Mucosa of descending colon (tissue), 3 donors: ENCODE measurements at regions of chr11 and their contacts with region 1.

Region 1: GRCh38 chr11:64152841-64153691 is 12.8 kb downstream of the MACROD1 start:
- DNase-seq: peak; percentile 67 to 82 (median 74)
- ATAC-seq: peak; percentile 96
- H3K4me3 ChIP-seq: no peak overlapping the region
- H3K4me1 ChIP-seq: no peaks in the 10 kb centered on the region
- CTCF ChIP-seq: peak; percentile 100

Region 2: GRCh38 chr11:63838678-63839507 is 314.2 kb before region 1 on chr11 and contains the start of gene MARK2:
- intact Hi-C with region 1: loop called in 1 of 2 experiments (anchors 10 kb)
- DNase-seq: peak; percentile 98 to 100 (median 100)
- ATAC-seq: peak; percentile 88
- H3K4me3 ChIP-seq: peak within 1 kb of the TSS; percentile 81
- H3K4me1 ChIP-seq: peaks cover 42% of the 10 kb centered on the region
- CTCF ChIP-seq: no peak
- total RNA-seq, gene MARK2: 71.9 to 111 (median 94.5) TPM

Region 3: DNA sequence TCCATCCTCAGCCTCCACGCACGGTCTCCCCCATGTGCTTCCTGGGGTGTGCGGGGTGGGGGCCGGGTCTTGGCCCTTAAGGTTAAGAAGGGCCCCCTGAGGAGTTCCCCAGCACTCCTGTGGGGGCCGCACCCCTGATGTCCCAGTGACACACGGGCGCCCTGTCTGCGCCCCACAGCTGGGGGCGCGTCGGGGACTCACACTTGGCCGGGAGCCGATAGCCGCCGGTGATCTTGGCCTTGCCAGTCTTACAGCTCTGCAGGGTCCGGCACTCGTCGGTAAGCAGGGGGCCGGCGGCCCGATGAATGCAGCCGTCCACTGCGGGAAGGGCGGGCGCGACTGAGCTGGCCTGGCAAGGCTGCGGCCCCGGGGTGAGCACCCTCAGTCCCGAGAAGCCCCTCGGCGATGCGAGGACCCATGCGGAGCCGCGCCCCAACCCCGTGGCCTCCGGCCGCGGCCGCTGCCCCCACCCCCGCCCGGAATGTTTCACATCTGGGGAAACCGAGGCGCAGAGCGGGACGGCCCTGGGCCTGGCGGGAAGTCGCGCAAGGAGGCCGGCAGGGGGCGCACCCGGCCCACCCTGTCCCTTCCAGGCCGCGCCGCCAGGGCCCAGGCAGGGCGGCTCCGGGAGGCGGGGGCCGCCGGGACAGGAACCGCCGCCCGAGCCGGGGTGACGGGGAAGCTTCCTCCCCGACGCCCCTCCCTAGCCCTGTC is 152.9 kb before region 1 on chr11:
- intact Hi-C with region 1: loop called (anchors 5 to 10 kb)
- DNase-seq: peak; percentile 67 to 79 (median 70)
- ATAC-seq: peak; percentile 87
- H3K4me3 ChIP-seq: no peak overlapping the region
- H3K4me1 ChIP-seq: peaks cover 15% of the 10 kb centered on the region
- CTCF ChIP-seq: peak; percentile 61